Mammary epithelial cell (primary cell): ENCODE measurements at regions of chr20 and their contacts with region 1.

Region 1: DNA sequence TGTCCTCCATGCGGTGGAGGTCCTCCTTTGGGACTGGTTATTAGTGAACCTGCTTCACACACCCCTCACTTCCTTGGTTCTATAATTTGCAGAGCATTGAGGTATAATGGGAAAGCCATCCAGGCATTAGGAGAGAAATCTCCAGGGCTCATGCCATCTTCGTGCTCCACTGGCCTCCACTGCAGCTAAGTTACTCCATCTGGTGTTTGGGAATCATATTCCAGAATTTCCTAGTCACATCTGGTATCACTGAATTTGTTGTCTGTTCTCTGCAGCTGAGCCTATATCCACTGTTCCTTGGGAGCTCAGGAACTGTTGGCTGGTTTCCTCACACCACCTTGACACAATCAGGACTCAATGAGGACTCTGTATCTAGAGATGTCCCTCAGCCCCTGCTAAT is 173.0 kb upstream of the TSHZ2 start:
- DNase-seq: no peak
- H3K4me3 ChIP-seq: no peak overlapping the region
- H3K27ac ChIP-seq: no peak overlapping the region
- H3K4me1 ChIP-seq: no peaks in the 10 kb centered on the region
- H3K27me3 ChIP-seq: no peaks in the 10 kb centered on the region
- CTCF ChIP-seq: no peak

Region 2: GRCh38 chr20:53187392-53188068 is 388.4 kb after region 1 on chr20:
- CTCF ChIA-PET with region 1: no interaction called
- dilution Hi-C with region 1: no loop called
- in situ Hi-C with region 1: no loop called
- intact Hi-C with region 1: loop called (anchors 10 kb)
- DNase-seq: no peak
- H3K4me3 ChIP-seq: no peak overlapping the region
- H3K27ac ChIP-seq: no peak overlapping the region
- H3K4me1 ChIP-seq: no peaks in the 10 kb centered on the region
- H3K27me3 ChIP-seq: no peaks in the 10 kb centered on the region
- CTCF ChIP-seq: no peak